PC-9 (cell line): ENCODE measurements at regions of chr13 and their contacts with region 1.

Region 1: DNA sequence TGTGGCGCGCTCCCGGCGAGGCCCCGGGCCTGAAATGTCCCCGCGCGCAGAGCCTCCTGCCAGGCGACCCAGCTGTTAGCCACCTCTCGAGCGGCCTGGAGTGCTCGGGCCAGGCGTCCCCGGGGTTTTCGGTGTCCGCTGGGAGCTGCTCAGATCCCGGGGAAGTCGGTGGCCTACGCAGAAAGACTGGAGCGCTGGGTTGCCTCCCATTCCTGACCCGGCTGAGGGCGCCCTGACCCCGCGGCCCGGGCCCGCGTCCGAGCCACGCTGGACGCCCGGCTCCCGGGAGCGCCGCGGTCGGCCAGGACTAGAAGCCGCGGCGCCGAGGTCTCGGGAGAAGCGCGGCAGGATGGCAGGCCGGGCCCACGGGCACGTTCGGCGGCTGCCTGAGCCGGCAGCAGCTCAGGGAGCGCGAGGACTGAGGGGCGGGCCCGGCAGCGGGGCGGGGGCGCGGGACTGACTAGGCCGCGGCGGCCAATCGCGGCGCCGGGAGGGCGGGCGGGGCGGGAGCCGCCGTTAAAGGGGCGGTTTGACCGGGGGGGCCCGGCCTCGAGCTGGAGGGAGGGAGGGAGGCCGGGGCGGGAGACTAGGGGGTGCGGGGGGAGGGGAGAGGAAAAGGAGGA is 1.3 kb upstream of the ZIC2 start:
- DNase-seq: peak; percentile 71 to 85
- H3K4me3 ChIP-seq: peak overlapping the region; percentile 98
- H3K27ac ChIP-seq: peak overlapping the region; percentile 64
- H3K4me1 ChIP-seq: peaks cover 15% of the 10 kb centered on the region
- H3K27me3 ChIP-seq: no peaks in the 10 kb centered on the region
- CTCF ChIP-seq: no peak; the same call in 1 of the 2 replicates

Region 2: GRCh38 chr13:99442273-99442895 is 537.9 kb before region 1 on chr13:
- CTCF ChIA-PET with region 1: no interaction called
- POLR2A ChIA-PET with region 1: no interaction called
- intact Hi-C with region 1: loop called (anchors 2 kb)
- DNase-seq: peak; percentile 42 to 49
- H3K4me3 ChIP-seq: no peak overlapping the region
- H3K27ac ChIP-seq: no peak overlapping the region
- H3K4me1 ChIP-seq: peaks cover 19% of the 10 kb centered on the region
- H3K27me3 ChIP-seq: no peaks in the 10 kb centered on the region
- CTCF ChIP-seq: peak; percentile 96

Region 3: GRCh38 chr13:99501184-99501847 is 479.0 kb before region 1 on chr13 and contains the start of gene TM9SF2:
- CTCF ChIA-PET with region 1: no interaction called
- POLR2A ChIA-PET with region 1: interaction called, 3 read pairs
- intact Hi-C with region 1: loop called (anchors 5 kb)
- DNase-seq: peak; percentile 94 to 98
- H3K4me3 ChIP-seq: peak within 1 kb of the TSS; percentile 79
- H3K27ac ChIP-seq: peak within 1 kb of the TSS; percentile 72
- H3K4me1 ChIP-seq: peaks cover 66% of the 10 kb centered on the region
- H3K27me3 ChIP-seq: no peaks in the 10 kb centered on the region
- CTCF ChIP-seq: no peak
- total RNA-seq, gene TM9SF2: 66.5 and 87.0 TPM in 2 replicates

Region 4: DNA sequence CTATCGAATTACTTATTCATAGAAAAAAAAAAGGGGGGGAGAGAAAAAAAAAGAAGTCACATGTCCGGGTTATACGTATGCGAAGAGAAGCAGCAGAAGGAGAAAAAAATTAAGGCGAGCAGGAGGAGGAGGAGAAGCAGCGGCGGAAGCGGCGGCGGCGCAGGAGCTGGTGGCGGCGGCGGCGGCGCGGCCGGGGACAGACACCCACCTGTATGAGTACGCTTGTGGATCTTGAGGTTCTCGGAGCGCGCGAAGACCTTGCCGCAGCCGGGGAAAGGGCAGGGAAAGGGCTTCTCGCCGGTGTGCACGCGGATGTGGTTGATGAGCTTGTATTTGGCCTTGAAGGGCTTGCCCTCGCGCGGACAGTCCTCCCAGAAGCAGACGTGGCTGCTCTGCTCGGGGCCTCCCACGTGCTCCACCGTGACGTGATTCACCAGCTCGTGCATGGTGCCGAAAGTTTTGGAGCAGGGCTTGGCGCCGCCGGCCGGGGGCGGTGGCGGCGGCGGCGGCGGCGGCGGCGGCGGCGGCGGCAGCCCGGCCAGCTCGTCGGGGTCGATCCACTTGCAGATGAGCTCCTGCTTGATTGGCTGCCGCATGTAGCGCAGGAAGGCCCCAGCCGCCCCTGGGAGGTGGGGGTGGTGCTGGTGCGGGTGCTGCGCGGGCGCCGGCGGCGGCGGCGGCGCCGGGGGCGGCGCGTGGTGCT is 10.2 kb before region 1 on chr13:
- CTCF ChIA-PET with region 1: no interaction called
- POLR2A ChIA-PET with region 1: interaction called, 14 read pairs
- intact Hi-C with region 1: no loop called
- DNase-seq: peak; percentile 62 to 63
- H3K4me3 ChIP-seq: peak overlapping the region; percentile 94
- H3K27ac ChIP-seq: peak overlapping the region; percentile 61
- H3K4me1 ChIP-seq: no peaks in the 10 kb centered on the region
- H3K27me3 ChIP-seq: no peaks in the 10 kb centered on the region
- CTCF ChIP-seq: no peak

Region 5: DNA sequence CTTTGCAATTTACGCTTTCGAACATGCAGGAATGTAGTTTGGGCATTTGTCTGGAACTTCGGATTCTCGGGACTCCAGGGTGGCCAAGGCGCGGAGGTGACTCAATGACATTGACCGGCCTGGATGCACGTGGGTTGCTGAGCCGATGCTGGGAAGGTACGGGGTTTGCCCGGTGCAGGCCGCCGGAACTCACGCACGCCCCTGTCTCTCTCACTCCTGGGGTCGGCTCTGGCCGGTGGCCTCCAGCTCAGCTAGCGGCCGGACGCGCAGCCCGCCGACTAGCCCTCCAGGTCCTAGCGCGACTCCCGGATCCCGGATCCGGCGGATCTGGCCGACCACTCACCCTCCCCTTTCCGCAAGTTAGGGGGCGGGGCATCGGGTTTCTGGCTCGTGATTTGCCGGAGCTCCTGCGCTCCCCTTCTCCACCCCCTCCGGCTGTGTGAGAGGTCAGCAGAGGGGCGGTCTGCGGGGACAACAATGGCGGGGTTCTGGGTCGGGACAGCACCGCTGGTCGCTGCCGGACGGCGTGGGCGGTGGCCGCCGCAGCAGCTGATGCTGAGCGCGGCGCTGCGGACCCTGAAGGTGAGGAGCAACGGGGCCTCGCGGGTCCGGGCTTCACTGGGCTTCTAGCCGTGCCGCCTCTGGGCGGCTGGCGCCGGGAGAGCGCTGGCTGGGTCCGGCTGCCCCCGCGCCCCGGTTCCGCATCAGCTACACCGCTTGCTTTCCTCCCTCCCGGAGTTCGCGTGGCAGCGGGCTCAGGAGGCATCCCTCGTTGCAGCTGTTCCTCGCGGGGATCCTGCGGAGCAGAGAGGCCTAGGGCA is 108.5 kb after region 1 on chr13 and contains the start of gene PCCA:
- CTCF ChIA-PET with region 1: interaction called, 6 read pairs
- POLR2A ChIA-PET with region 1: no interaction called
- intact Hi-C with region 1: loop called (anchors 1 kb)
- DNase-seq: peak; percentile 90 to 94
- H3K4me3 ChIP-seq: peak within 1 kb of the TSS; percentile 77
- H3K27ac ChIP-seq: no peak within 1 kb of the TSS; the same call in 1 of the 2 replicates
- H3K4me1 ChIP-seq: peaks cover 16% of the 10 kb centered on the region
- H3K27me3 ChIP-seq: no peaks in the 10 kb centered on the region
- CTCF ChIP-seq: no peak
- total RNA-seq, gene PCCA: 16.1 and 16.7 TPM in 2 replicates

Region 6: GRCh38 chr13:100514788-100515409 is 534.6 kb after region 1 on chr13:
- CTCF ChIA-PET with region 1: interaction called, 3 read pairs
- POLR2A ChIA-PET with region 1: no interaction called
- intact Hi-C with region 1: loop called (anchors 10 kb)
- DNase-seq: peak; percentile 42 to 62
- H3K4me3 ChIP-seq: no peak overlapping the region
- H3K27ac ChIP-seq: no peak overlapping the region
- H3K4me1 ChIP-seq: no peaks in the 10 kb centered on the region
- H3K27me3 ChIP-seq: no peaks in the 10 kb centered on the region
- CTCF ChIP-seq: peak; percentile 97